ENCODE measurements at regions of chr10 and their contacts with region 1.

Region 1: DNA sequence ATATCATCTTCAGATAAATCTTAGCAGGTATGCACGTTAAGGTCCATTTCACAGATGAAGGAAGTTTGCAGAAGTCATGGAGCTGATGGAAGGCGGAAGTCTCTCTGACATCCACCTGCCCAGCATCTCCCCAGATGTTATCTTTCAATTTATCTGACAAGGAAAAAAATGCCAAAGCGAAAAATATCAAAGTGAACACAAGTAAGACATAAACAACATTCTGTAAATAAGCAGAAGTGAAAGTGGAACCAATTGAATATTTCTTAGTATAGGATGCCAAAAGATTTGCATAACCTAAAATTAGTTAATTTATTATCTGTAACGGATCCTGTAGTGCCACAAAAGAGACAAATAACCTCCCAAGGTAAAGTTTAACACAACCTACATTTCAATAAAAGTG is 73.6 kb upstream of the NEBL start:
- DNase-seq: peak; percentile 87
- H3K4me3 ChIP-seq: peak overlapping the region; percentile 34
- H3K27ac ChIP-seq: peak overlapping the region; percentile 95
- H3K4me1 ChIP-seq: peaks cover 41% of the 10 kb centered on the region
- CTCF ChIP-seq: no peak

Region 2: DNA sequence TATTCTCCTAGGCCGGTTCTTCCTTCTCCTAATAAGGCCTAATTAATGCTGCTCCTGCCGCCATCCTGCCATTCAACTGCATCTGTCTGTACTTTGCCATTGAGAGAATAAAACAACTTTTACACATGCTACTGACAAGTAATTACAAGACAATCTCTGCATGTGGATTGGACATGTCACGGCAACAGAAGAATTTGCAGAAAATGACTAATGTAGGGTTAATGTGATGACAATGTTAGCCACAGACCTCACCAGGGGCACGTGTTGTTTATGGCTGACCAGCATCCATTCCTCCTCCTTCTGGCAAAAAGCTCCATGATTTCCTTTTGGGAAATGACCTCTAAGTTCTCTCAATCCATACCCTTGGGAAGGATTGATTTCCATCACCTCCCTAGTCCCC is 131.6 kb before region 1 on chr10:
- CTCF ChIA-PET with region 1: no interaction called
- POLR2A ChIA-PET with region 1: no interaction called
- intact Hi-C with region 1: no loop called
- DNase-seq: no peak
- H3K4me3 ChIP-seq: no peak overlapping the region
- H3K27ac ChIP-seq: no peak overlapping the region
- H3K4me1 ChIP-seq: no peaks in the 10 kb centered on the region
- CTCF ChIP-seq: no peak

Region 3: GRCh38 chr10:20936396-20936795 is 34.3 kb before region 1 on chr10:
- CTCF ChIA-PET with region 1: no interaction called
- POLR2A ChIA-PET with region 1: no interaction called
- intact Hi-C with region 1: no loop called
- DNase-seq: no peak
- H3K4me3 ChIP-seq: no peak overlapping the region
- H3K27ac ChIP-seq: no peak overlapping the region
- H3K4me1 ChIP-seq: no peaks in the 10 kb centered on the region
- CTCF ChIP-seq: no peak

Region 4: DNA sequence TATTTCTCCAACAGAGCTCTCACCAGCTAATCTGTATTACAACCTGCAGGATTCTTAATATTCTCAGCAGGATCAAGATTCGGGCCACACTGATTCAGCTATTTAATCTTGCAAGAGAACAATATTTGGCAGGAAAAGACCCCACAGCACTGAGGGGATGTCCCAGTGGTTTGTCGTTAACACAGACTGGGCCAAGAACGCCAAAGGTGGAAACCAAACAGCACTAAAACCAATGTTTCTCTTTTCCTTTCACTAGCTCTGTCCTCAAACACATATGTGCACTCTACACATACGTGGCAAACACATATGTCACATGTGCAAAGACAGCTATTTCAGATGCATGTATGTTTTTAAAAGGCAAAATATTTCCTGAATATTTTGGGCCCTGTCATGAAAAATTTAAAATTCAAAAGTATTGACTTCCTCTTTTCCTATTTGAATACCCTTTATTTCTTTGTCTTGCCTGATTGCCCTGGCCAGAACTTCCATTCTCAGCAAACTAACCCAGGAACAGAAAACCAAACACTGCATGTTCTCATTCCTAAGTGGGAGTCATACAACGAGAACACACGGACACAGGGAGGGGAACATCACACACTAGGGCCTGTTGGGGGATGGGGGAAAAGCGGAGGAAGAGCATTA is 21.9 kb before region 1 on chr10:
- CTCF ChIA-PET with region 1: no interaction called
- POLR2A ChIA-PET with region 1: interaction called, 22 read pairs
- intact Hi-C with region 1: loop called (anchors 2 kb)
- DNase-seq: peak; percentile 25
- H3K4me3 ChIP-seq: peak overlapping the region; percentile 58
- H3K27ac ChIP-seq: peak overlapping the region; percentile 33
- H3K4me1 ChIP-seq: peaks cover 25% of the 10 kb centered on the region
- CTCF ChIP-seq: no peak

Region 5: DNA sequence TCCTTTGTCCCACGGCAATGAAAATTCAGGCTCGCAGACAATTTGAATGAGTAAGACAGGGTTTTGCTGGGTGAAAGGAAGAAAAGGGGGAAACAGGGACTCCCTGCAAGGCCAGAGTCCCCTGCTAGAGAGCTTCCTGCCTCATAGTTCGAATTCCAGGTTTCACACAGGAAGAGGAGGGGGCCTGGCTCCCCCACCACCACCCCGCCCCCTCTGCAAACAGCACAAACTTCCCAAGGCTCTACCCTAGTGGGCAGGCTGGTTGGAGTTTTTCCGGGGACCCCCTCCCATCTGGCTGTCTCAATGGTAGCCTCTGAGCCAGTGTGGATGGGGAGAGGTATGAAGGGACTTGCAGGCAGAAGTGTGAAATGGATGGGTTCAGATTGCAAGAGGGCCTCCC is 16.2 kb before region 1 on chr10:
- CTCF ChIA-PET with region 1: no interaction called
- POLR2A ChIA-PET with region 1: interaction called, 22 read pairs
- intact Hi-C with region 1: loop called (anchors 2 kb)
- DNase-seq: no peak
- H3K4me3 ChIP-seq: no peak overlapping the region
- H3K27ac ChIP-seq: no peak overlapping the region
- H3K4me1 ChIP-seq: peaks cover 19% of the 10 kb centered on the region
- CTCF ChIP-seq: no peak

Region 6: GRCh38 chr10:21315645-21316281 is 345.1 kb after region 1 on chr10:
- CTCF ChIA-PET with region 1: no interaction called
- POLR2A ChIA-PET with region 1: no interaction called
- intact Hi-C with region 1: no loop called
- DNase-seq: no peak
- H3K4me3 ChIP-seq: no peak overlapping the region
- H3K27ac ChIP-seq: no peak overlapping the region
- H3K4me1 ChIP-seq: peaks cover 25% of the 10 kb centered on the region
- CTCF ChIP-seq: no peak

Measured in OCI-LY7 (cell line).